ENCODE measurements at regions of chr2 and their contacts with region 1.

Region 1: GRCh38 chr2:119826370-119826961 is 66.7 kb downstream of the PTPN4 start:
- DNase-seq: peak in 1 of 3 donors; percentile 46
- ATAC-seq: peak; percentile 70
- H3K4me3 ChIP-seq: no peak overlapping the region
- H3K4me1 ChIP-seq: no peaks in the 10 kb centered on the region
- CTCF ChIP-seq: peak; percentile 29

Region 2: GRCh38 chr2:118278046-118278445 is 1548.4 kb before region 1 on chr2:
- intact Hi-C with region 1: no loop called
- DNase-seq: no peak
- ATAC-seq: no peak
- H3K4me3 ChIP-seq: no peak overlapping the region
- H3K4me1 ChIP-seq: no peaks in the 10 kb centered on the region
- CTCF ChIP-seq: no peak

Region 3: DNA sequence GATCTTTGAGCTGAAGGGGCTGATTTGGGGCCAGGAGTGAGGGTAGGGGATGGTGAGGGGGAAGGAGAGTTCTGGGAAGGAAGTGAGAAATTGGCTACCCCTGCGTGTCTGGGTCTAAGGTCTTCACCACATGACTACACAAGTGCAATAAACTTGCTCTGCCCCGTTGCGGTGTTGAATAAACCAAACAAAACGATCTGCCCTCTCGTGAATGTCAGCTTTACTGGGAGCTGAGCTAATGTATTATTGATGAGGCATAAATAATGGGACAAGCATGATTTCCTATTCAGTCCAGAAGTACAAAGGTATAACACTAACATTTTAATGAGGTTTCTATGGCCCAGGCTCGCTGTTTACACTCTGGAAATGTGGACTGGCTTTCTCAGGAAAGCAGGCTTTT is 290.3 kb before region 1 on chr2:
- intact Hi-C with region 1: no loop called
- DNase-seq: no peak
- ATAC-seq: no peak
- H3K4me3 ChIP-seq: no peak overlapping the region
- H3K4me1 ChIP-seq: no peaks in the 10 kb centered on the region
- CTCF ChIP-seq: no peak

Region 4: GRCh38 chr2:119702918-119703401 is 123.5 kb before region 1 on chr2:
- intact Hi-C with region 1: loop called in 1 of 2 experiments (anchors 10 kb)
- DNase-seq: peak; percentile 59 to 78 (median 69)
- ATAC-seq: peak; percentile 98
- H3K4me3 ChIP-seq: no peak overlapping the region
- H3K4me1 ChIP-seq: no peaks in the 10 kb centered on the region
- CTCF ChIP-seq: peak; percentile 95

Region 5: GRCh38 chr2:119759451-119760236 is 66.8 kb before region 1 on chr2 and contains the start of gene PTPN4:
- intact Hi-C with region 1: loop called in 1 of 2 experiments (anchors 10 kb)
- DNase-seq: peak; percentile 96 to 99 (median 98)
- ATAC-seq: peak; percentile 97
- H3K4me3 ChIP-seq: peak within 1 kb of the TSS; percentile 71
- H3K4me1 ChIP-seq: peaks cover 6% of the 10 kb centered on the region
- CTCF ChIP-seq: no peak
- total RNA-seq, gene PTPN4: 23.1 to 35.4 (median 30.1) TPM

Measured in mucosa of descending colon (tissue), 3 donors.